ENCODE measurements at regions of chr14 and their contacts with region 1.

Region 1: GRCh38 chr14:75906676-75907280 is 75.0 kb downstream of the TGFB3 start:
- DNase-seq: peak; percentile 21 to 62 (median 54)
- ATAC-seq: peak; percentile 74
- H3K4me3 ChIP-seq: no peak overlapping the region
- H3K4me3 Mint-ChIP-seq: no peak overlapping the region
- H3K27ac ChIP-seq: no peak overlapping the region
- H3K27ac Mint-ChIP-seq: no peak overlapping the region
- H3K4me1 ChIP-seq: no peaks in the 10 kb centered on the region
- H3K4me1 Mint-ChIP-seq: peaks cover 0 to 2% (median 0%) of the 10 kb centered on the region in 7 donors
- H3K27me3 ChIP-seq: no peaks in the 10 kb centered on the region
- H3K27me3 Mint-ChIP-seq: no peaks in the 10 kb centered on the region

Region 2: GRCh38 chr14:75697386-75697785 is 209.4 kb before region 1 on chr14:
- CTCF ChIA-PET with region 1: no interaction called
- POLR2A ChIA-PET with region 1: no interaction called
- intact Hi-C with region 1: no loop called
- DNase-seq: no peak
- ATAC-seq: no peak
- H3K4me3 ChIP-seq: no peak overlapping the region
- H3K4me3 Mint-ChIP-seq: no peak overlapping the region
- H3K27ac ChIP-seq: no peak overlapping the region
- H3K27ac Mint-ChIP-seq: no peak overlapping the region
- H3K4me1 ChIP-seq: no peaks in the 10 kb centered on the region
- H3K4me1 Mint-ChIP-seq: no peaks in the 10 kb centered on the region
- H3K27me3 ChIP-seq: no peaks in the 10 kb centered on the region
- H3K27me3 Mint-ChIP-seq: no peaks in the 10 kb centered on the region

Region 3: DNA sequence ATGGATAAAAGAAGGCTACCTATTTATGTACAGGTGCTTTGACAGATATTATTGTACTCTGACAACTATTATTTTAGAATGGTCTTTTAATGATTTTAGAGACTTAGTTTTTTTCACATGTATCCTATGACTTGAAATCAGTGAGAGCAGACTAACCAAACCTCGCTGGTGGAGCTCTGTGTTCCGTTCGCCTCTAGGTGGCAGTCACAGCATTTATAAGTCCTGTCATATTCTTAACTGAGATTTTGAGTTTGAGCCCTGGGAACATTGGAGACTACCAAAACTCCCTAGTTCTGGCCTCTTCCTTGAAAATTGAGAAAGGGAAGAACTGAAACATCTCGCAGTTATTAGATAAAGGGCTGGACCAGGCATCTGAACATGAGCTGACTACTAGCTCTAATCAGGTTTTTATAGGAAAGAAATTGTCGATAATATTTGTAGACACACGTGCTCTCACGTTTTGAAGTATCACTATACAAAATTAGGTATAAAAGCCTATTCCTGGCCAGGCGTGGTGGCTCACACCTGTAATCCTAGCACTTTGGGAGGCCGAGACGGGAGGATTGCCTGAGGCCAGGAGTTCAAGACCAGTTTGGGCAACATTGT is 197.5 kb before region 1 on chr14:
- CTCF ChIA-PET with region 1: interaction called, 11 read pairs
- POLR2A ChIA-PET with region 1: no interaction called
- intact Hi-C with region 1: loop called (anchors 1 to 10 kb)
- DNase-seq: peak in 8 of 9 donors; percentile 33 to 65 (median 56)
- ATAC-seq: peak; percentile 83
- H3K4me3 ChIP-seq: no peak overlapping the region
- H3K4me3 Mint-ChIP-seq: no peak overlapping the region
- H3K27ac ChIP-seq: no peak overlapping the region
- H3K27ac Mint-ChIP-seq: no peak overlapping the region
- H3K4me1 ChIP-seq: no peaks in the 10 kb centered on the region
- H3K4me1 Mint-ChIP-seq: no peaks in the 10 kb centered on the region
- H3K27me3 ChIP-seq: no peaks in the 10 kb centered on the region
- H3K27me3 Mint-ChIP-seq: no peaks in the 10 kb centered on the region

Region 4: DNA sequence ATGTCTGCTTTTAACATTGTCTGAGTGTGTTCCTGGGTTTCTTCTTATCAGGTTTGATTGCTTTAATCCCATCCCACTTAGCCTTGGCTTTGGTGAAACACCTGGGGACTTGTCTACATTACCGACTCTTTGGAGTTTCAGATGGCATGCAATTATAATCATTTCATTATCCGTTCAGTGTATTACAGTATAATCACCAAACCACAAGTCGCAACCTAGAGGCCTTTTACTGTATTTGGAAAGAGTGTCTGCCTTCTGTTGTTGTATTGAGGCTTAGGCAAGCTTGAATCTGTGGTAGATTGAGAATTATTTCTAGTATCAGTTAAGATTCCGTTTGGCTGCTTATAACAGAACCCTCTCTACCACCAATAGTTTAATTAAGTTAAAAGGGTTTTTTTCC is 28.9 kb before region 1 on chr14:
- CTCF ChIA-PET with region 1: no interaction called
- POLR2A ChIA-PET with region 1: no interaction called
- intact Hi-C with region 1: loop called in 1 of 2 experiments (anchors 1 kb)
- DNase-seq: no peak
- ATAC-seq: no peak
- H3K4me3 ChIP-seq: no peak overlapping the region
- H3K4me3 Mint-ChIP-seq: no peak overlapping the region
- H3K27ac ChIP-seq: no peak overlapping the region
- H3K27ac Mint-ChIP-seq: no peak overlapping the region
- H3K4me1 ChIP-seq: no peaks in the 10 kb centered on the region
- H3K4me1 Mint-ChIP-seq: peaks cover 0 to 12% (median 0%) of the 10 kb centered on the region in 7 donors
- H3K27me3 ChIP-seq: no peaks in the 10 kb centered on the region
- H3K27me3 Mint-ChIP-seq: no peaks in the 10 kb centered on the region

Region 5: DNA sequence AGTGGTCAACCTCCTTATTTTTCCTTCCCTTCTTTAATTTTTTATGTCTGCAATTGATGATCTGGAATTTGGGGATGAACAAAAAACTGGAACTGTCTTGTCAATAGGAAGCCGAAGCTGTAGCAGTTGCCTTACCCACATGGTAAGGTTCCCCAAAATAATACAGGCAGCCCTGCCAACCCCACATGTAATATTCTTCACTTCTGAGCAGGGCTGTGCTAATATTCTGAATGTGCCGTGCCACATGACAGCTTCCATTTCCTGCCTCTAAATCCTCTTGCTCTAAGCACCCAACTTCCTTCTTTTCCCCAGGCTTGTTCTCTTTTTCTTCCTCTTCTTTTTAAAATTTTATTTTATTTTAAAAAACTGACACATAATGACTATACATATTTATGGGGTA is 284.5 kb after region 1 on chr14:
- CTCF ChIA-PET with region 1: no interaction called
- POLR2A ChIA-PET with region 1: no interaction called
- intact Hi-C with region 1: no loop called
- DNase-seq: no peak
- ATAC-seq: peak; percentile 83
- H3K4me3 ChIP-seq: no peak overlapping the region
- H3K4me3 Mint-ChIP-seq: no peak overlapping the region
- H3K27ac ChIP-seq: no peak overlapping the region
- H3K27ac Mint-ChIP-seq: no peak overlapping the region
- H3K4me1 ChIP-seq: no peaks in the 10 kb centered on the region
- H3K4me1 Mint-ChIP-seq: peaks cover 4 to 27% (median 12%) of the 10 kb centered on the region in 7 donors
- H3K27me3 ChIP-seq: no peaks in the 10 kb centered on the region
- H3K27me3 Mint-ChIP-seq: no peaks in the 10 kb centered on the region

Region 6: GRCh38 chr14:76386915-76387782 is 480.4 kb after region 1 on chr14:
- CTCF ChIA-PET with region 1: no interaction called
- POLR2A ChIA-PET with region 1: no interaction called
- intact Hi-C with region 1: loop called in 1 of 2 experiments (anchors 5 kb)
- DNase-seq: peak in 8 of 9 donors; percentile 1 to 72 (median 35)
- ATAC-seq: peak; percentile 75
- H3K4me3 ChIP-seq: no peak overlapping the region
- H3K4me3 Mint-ChIP-seq: no peak overlapping the region
- H3K27ac ChIP-seq: no peak overlapping the region
- H3K27ac Mint-ChIP-seq: no peak overlapping the region
- H3K4me1 ChIP-seq: no peaks in the 10 kb centered on the region
- H3K4me1 Mint-ChIP-seq: no peaks in the 10 kb centered on the region
- H3K27me3 ChIP-seq: peaks cover 0 to 7% of the 10 kb centered on the region in 2 donors
- H3K27me3 Mint-ChIP-seq: peaks cover 27 to 58% (median 52%) of the 10 kb centered on the region in 5 donors